Heart right ventricle (tissue), 16 donors: ENCODE measurements at regions of chr7 and their contacts with region 1.

Region 1: GRCh38 chr7:106450716-106451115 is 165.9 kb upstream of the NAMPT start:
- DNase-seq: no peak
- ATAC-seq: no peak
- H3K4me3 ChIP-seq: no peak overlapping the region
- H3K27ac ChIP-seq: no peak overlapping the region
- H3K4me1 ChIP-seq: no peaks in the 10 kb centered on the region
- H3K27me3 ChIP-seq: no peaks in the 10 kb centered on the region
- CTCF ChIP-seq: no peak

Region 2: GRCh38 chr7:106313966-106314365 is 136.8 kb before region 1 on chr7:
- intact Hi-C with region 1: loop called in 1 of 10 experiments (anchors 10 kb)
- DNase-seq: no peak
- ATAC-seq: peak in 5 of 8 donors; percentile 39 to 72 (median 49)
- H3K4me3 ChIP-seq: no peak overlapping the region
- H3K27ac ChIP-seq: peak overlapping the region in 5 of 10 donors; percentile 33 to 84 (median 43)
- H3K4me1 ChIP-seq: peaks cover 0 to 23% (median 0%) of the 10 kb centered on the region in 9 donors
- H3K27me3 ChIP-seq: peaks cover 0 to 4% (median 0%) of the 10 kb centered on the region in 7 donors
- CTCF ChIP-seq: no peak

Region 3: DNA sequence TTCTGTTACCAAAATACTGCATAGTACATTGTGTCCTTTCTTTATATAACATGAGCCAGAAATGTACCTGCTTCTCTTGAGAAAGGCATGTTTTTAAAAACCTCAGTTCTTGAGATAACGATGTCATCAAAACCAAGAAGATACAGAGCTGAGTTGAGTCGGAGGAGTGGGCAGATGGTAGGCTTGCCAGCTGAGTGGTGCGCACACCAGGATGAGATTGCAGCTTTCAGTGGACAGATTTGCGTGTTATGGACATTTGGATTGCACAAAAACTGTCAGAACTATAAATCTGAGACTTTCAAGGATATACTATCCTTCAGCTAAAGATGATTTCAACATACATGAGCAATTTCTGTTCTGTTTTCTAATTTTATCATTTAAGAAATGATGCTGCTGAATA is 618.7 kb after region 1 on chr7:
- intact Hi-C with region 1: no loop called
- DNase-seq: no peak
- ATAC-seq: no peak
- H3K4me3 ChIP-seq: peak overlapping the region in 3 of 10 donors; percentile 35 to 38 (median 36)
- H3K27ac ChIP-seq: no peak overlapping the region
- H3K4me1 ChIP-seq: peaks cover 0 to 16% (median 10%) of the 10 kb centered on the region in 9 donors
- H3K27me3 ChIP-seq: no peaks in the 10 kb centered on the region
- CTCF ChIP-seq: no peak